Activated CD4-positive, alpha-beta memory T cell treated with anti-CD3 and anti-CD28 coated beads for 36 hours (primary cell): ENCODE measurements at regions of chr3 and their contacts with region 1.

Region 1: GRCh38 chr3:106176734-106177133 is 307.9 kb upstream of the CBLB start:
- DNase-seq: peak; percentile 76
- H3K4me3 Mint-ChIP-seq: peak overlapping the region; percentile 51
- H3K27ac Mint-ChIP-seq: peak overlapping the region; percentile 87
- H3K4me1 Mint-ChIP-seq: peaks cover 58% of the 10 kb centered on the region
- H3K27me3 Mint-ChIP-seq: no peaks in the 10 kb centered on the region

Region 2: GRCh38 chr3:105676621-105677300 is 500.0 kb before region 1 on chr3:
- CTCF ChIA-PET with region 1: no interaction called
- POLR2A ChIA-PET with region 1: no interaction called
- intact Hi-C with region 1: loop called (anchors 1 kb)
- DNase-seq: peak; percentile 77
- H3K4me3 Mint-ChIP-seq: no peak overlapping the region
- H3K27ac Mint-ChIP-seq: peak overlapping the region; percentile 86
- H3K4me1 Mint-ChIP-seq: peaks cover 9% of the 10 kb centered on the region
- H3K27me3 Mint-ChIP-seq: no peaks in the 10 kb centered on the region

Region 3: GRCh38 chr3:105836533-105836932 is 340.2 kb before region 1 on chr3:
- CTCF ChIA-PET with region 1: no interaction called
- POLR2A ChIA-PET with region 1: no interaction called
- intact Hi-C with region 1: loop called (anchors 2 kb)
- DNase-seq: peak; percentile 78
- H3K4me3 Mint-ChIP-seq: peak overlapping the region; percentile 58
- H3K27ac Mint-ChIP-seq: peak overlapping the region; percentile 80
- H3K4me1 Mint-ChIP-seq: peaks cover 74% of the 10 kb centered on the region
- H3K27me3 Mint-ChIP-seq: no peaks in the 10 kb centered on the region

Region 4: DNA sequence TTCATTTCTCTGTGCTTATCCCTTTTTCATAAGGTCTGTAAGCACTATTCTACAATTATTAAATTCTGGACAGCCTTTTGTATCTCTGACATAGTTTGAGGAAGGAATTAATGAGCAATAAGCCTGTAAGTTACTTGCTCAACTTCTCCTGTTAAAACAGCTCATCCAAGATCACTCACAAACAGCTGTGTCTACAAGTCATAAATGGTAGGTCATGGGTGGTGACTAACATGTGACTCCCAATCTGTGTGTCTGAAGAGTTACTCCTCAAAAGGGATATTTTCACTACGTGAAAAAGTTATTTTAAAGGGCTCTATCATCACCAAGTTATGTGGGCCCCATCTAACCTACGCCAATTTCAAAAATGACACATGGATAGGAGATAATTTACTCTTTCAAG is 162.8 kb before region 1 on chr3:
- CTCF ChIA-PET with region 1: interaction called, 4 read pairs
- POLR2A ChIA-PET with region 1: no interaction called
- intact Hi-C with region 1: loop called (anchors 1 kb)
- DNase-seq: no peak
- H3K4me3 Mint-ChIP-seq: no peak overlapping the region
- H3K27ac Mint-ChIP-seq: peak overlapping the region; percentile 30
- H3K4me1 Mint-ChIP-seq: peaks cover 41% of the 10 kb centered on the region
- H3K27me3 Mint-ChIP-seq: no peaks in the 10 kb centered on the region

Region 5: DNA sequence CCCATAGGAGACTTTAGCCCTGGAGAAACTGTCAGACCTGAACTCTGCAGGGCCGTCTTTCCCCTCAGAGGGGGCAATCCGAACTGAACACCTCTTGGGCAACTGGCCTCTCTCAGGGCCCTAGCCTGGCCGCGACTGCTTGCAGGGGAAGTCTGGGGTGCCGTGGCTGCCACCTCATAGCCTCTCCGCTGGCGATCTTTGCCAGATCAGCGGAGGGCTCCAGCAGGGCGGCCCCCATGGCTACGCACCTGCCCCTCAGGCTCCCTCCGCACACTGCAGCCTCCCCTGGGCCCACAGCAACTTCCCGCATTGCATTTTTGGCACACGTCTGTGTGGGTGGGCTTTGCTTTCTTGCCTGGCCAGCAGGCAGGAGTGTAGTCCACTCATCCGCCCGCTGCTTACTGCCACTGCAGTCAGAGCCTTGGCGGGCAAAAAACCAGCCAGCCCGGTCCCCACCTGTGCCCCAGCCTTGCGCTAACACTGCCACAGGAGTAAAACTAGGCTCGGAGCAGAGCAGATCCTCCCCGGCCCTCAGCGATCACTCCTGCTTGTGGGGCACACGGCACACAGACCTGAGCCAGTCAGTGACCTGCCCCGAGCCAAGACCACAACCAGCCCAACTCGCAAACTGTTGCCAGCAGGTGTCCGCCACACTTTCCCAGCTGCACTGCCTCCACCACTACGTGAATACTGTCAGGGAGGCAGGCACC is 41.1 kb before region 1 on chr3:
- CTCF ChIA-PET with region 1: no interaction called
- POLR2A ChIA-PET with region 1: no interaction called
- intact Hi-C with region 1: no loop called
- DNase-seq: no peak
- H3K4me3 Mint-ChIP-seq: no peak overlapping the region
- H3K27ac Mint-ChIP-seq: no peak overlapping the region
- H3K4me1 Mint-ChIP-seq: peaks cover 10% of the 10 kb centered on the region
- H3K27me3 Mint-ChIP-seq: no peaks in the 10 kb centered on the region

Region 6: DNA sequence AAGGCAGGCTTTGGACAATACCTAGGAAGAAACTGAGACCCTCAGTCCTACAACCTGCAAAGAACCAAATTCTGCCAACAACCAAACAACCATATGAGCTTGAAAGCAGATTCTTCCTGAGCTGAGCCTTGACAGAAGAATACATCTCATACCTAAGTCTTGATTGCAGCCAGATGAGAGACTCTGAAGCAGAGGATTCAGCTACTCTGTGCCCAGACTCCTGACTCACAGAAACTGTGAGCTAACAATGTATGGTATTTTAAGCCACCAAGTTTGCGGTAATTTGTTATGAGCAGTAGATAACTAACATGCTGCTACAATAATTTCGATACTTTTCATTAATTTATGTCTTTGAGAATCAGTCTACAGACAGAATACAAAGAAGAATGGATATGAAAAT is 17.1 kb after region 1 on chr3:
- CTCF ChIA-PET with region 1: no interaction called
- POLR2A ChIA-PET with region 1: no interaction called
- intact Hi-C with region 1: no loop called
- DNase-seq: no peak
- H3K4me3 Mint-ChIP-seq: no peak overlapping the region
- H3K27ac Mint-ChIP-seq: no peak overlapping the region
- H3K4me1 Mint-ChIP-seq: peaks cover 14% of the 10 kb centered on the region
- H3K27me3 Mint-ChIP-seq: no peaks in the 10 kb centered on the region

Region 7: GRCh38 chr3:106206146-106206545 is 29.4 kb after region 1 on chr3:
- CTCF ChIA-PET with region 1: no interaction called
- POLR2A ChIA-PET with region 1: no interaction called
- intact Hi-C with region 1: loop called (anchors 1 kb)
- DNase-seq: peak; percentile 24
- H3K4me3 Mint-ChIP-seq: peak overlapping the region; percentile 9
- H3K27ac Mint-ChIP-seq: peak overlapping the region; percentile 93
- H3K4me1 Mint-ChIP-seq: peaks cover 48% of the 10 kb centered on the region
- H3K27me3 Mint-ChIP-seq: no peaks in the 10 kb centered on the region

Region 8: DNA sequence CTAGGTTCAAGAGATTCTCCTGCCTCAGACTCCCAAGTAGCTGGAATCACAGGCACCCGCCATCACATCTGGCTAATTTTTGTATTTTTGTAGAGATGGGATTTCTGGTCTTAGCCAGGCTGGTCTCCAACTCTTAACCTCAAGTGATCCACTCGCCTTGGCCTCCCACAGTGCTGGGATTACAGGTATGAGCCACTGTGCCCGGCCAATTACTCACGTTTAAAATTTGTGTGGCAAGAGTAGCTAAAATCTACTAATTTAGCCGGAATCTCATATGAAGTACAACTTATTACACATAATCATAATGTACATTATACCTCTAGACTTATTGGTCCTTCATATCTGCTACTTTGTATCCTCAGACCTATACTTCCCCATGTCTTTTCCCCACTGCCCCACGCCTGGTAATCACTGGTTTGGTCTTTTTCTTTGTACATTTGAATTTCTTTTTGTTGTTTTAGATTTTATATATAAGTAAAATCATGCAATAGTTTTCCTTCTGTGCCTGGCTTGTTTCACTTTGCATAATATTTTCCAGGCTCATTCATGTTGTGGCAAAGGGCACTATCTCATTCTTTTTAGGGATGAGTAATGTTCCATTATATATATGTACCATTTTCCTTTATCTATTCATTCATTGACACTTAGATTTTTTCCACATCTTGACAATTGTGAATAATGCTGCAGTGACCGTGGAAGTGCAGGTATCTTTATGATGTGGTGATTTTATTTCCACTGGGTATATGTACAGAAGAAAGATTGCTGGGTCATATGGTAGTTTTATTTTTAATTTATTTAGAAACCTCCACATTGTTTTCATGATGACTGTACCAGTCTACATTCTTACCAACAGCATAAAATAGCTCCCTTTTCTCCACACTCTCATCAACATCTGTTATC is 297.1 kb after region 1 on chr3:
- CTCF ChIA-PET with region 1: no interaction called
- POLR2A ChIA-PET with region 1: interaction called, 4 read pairs
- intact Hi-C with region 1: loop called (anchors 2 kb)
- DNase-seq: peak; percentile 53
- H3K4me3 Mint-ChIP-seq: no peak overlapping the region
- H3K27ac Mint-ChIP-seq: peak overlapping the region; percentile 71
- H3K4me1 Mint-ChIP-seq: peaks cover 19% of the 10 kb centered on the region
- H3K27me3 Mint-ChIP-seq: no peaks in the 10 kb centered on the region